ENCODE measurements at regions of chr3 and their contacts with region 1.

Region 1: GRCh38 chr3:78659386-78659987 is 1108.3 kb downstream of the ROBO1 start:
- H3K4me3 Mint-ChIP-seq: no peak overlapping the region
- H3K27ac Mint-ChIP-seq: no peak overlapping the region
- H3K4me1 Mint-ChIP-seq: no peaks in the 10 kb centered on the region
- H3K27me3 Mint-ChIP-seq: no peaks in the 10 kb centered on the region

Region 2: DNA sequence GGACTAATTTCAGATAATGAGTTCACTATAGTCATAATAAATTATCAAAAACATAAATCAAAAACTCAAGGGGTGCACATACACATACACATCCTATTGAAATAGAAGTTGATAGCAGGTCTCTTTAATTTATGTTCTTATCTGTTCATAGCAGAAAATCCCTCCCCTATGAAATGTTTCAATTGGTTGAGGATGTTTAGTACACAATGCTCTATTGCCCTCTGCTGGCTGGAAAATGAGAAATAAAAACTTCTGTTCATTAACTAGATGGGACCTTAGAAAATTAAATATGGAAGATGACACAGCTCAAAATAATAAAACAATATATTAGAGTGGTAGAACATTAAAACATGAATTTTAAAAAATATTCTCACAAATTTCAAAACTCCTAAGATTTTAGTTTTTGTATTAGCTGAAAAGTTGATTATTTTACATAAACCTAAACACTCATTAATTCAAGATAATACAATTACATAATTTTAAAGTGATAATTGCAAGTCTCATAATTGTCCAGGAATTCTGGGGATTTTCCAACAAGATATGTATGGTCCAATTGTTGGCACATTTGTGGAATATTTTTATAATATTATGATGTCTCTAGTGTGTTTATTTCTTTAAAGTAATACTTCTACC is 373.3 kb after region 1 on chr3:
- intact Hi-C with region 1: loop called (anchors 1 kb)
- H3K4me3 Mint-ChIP-seq: no peak overlapping the region
- H3K27ac Mint-ChIP-seq: no peak overlapping the region
- H3K4me1 Mint-ChIP-seq: no peaks in the 10 kb centered on the region
- H3K27me3 Mint-ChIP-seq: no peaks in the 10 kb centered on the region

Region 3: GRCh38 chr3:79358327-79358726 is 698.8 kb after region 1 on chr3:
- intact Hi-C with region 1: loop called (anchors 2 kb)
- H3K4me3 Mint-ChIP-seq: no peak overlapping the region
- H3K27ac Mint-ChIP-seq: no peak overlapping the region
- H3K4me1 Mint-ChIP-seq: no peaks in the 10 kb centered on the region
- H3K27me3 Mint-ChIP-seq: no peaks in the 10 kb centered on the region

Measured in dendritic cell treated with granulocyte-macrophage colony-stimulating factor and Interleukin-4, amounts not matched to agents 40 ng/mL and 50 ng/mL, for 4 days (primary cell).